ENCODE measurements at regions of chr17 and their contacts with region 1.

Region 1: GRCh38 chr17:79839363-79840268 is at the start of gene CBX4:
- DNase-seq: peak; percentile 93 to 99 (median 98)

Region 2: DNA sequence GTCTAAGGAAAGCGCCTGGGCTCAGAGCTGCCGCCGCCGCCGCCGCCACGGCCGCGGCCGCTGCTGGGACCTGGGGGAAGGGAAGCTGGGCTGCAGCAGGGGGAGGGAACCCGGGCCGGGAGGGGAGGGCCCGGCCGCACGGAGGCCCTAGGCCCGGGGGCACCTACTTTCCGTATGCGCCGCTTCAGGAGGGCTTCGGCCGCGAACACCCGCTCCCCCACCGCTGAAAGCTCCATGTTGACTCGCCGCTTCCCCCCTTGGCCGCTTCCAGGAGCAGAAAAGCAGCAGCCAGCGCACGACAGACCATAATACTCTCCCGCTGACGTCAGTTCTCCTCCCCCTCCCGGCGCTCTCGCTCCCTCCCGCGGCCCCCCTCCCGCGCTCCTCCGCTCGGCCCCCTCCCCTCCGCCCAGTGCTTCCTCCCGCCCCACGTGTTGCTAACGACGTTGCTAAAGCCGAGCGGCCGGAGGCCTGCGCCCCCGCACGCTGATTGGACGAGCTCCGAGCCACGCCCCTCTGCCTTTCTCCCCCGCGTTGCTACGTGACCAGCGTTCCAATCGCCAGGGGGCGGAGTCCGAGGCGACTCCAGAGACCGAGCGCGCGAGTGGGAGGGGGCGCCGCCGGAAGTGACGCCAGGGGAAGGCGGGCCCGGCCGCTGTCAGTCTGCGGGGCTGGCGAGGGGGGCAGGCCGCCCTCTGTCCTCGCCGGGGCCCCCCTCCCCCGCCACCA is 42.7 kb before region 1 on chr17 and contains the start of gene CBX8:
- intact Hi-C with region 1: loop called (anchors 5 kb)
- DNase-seq: peak; percentile 99 to 100 (median 100)

Region 3: GRCh38 chr17:79810130-79811010 is 29.2 kb before region 1 on chr17:
- intact Hi-C with region 1: loop called (anchors 2 kb)
- DNase-seq: peak; percentile 48 to 90 (median 80)

Region 4: DNA sequence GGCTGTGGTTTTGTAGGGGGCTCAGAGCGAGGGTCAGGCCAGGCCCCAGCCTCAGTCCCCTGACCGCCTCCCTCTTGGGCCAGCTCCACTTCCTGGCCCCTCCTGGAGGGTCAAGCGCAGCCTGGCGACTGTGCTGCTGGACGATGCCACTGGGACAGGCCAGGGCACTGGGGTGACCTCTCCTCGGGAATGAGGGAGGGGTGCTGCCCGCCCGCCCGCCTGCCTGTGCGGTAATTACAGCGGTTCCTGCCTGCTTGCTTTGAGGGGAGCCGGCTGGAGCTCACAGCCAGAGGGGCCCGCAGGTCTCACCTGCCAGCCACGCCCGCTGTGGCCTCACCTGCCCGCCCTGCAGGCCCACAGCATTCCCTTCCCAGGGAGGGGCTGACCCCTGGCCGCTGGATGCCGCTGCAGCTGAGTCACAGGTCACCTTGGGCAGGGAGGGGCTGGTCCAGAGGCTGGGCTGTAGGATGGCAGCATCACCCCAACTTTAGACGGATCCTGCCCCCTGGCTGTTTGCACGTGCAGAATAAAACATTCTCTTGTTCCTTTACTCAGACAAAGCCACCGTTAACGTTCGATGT is 76.3 kb after region 1 on chr17:
- intact Hi-C with region 1: loop called (anchors 10 kb)
- DNase-seq: peak in 10 of 42 donors; percentile 34 to 67 (median 56)

Region 5: GRCh38 chr17:79926142-79926604 is 86.6 kb after region 1 on chr17:
- intact Hi-C with region 1: no loop called
- DNase-seq: no peak

Region 6: GRCh38 chr17:79974566-79975497 is 135.2 kb after region 1 on chr17:
- intact Hi-C with region 1: loop called (anchors 5 kb)
- DNase-seq: peak in 14 of 42 donors; percentile 2 to 39 (median 14)

Region 7: GRCh38 chr17:79991140-79991923 is 151.7 kb after region 1 on chr17:
- intact Hi-C with region 1: loop called (anchors 5 kb)
- DNase-seq: peak; percentile 78 to 95 (median 89)

Measured in head of caudate nucleus (tissue), 42 donors.